Activated T-helper 2 cell treated with anti-CD3 and anti-CD28 coated beads, Interferon-gamma antibody, Interleukin-2, Interleukin-4, amounts not matched to agents 10 μg/mL and 5 μg/mL and 100 μg/mL, durations not matched to agents 14 hours and 24 hours and 36 hours (primary cell): ENCODE measurements at regions of chrX and their contacts with region 1.

Region 1: GRCh38 chrX:139559383-139560042 is 29.0 kb downstream of the F9 start:
- DNase-seq: no peak
- H3K4me3 Mint-ChIP-seq: no peak overlapping the region
- H3K27ac Mint-ChIP-seq: no peak overlapping the region
- H3K4me1 Mint-ChIP-seq: no peaks in the 10 kb centered on the region
- H3K27me3 Mint-ChIP-seq: peaks cover 3% of the 10 kb centered on the region

Region 2: DNA sequence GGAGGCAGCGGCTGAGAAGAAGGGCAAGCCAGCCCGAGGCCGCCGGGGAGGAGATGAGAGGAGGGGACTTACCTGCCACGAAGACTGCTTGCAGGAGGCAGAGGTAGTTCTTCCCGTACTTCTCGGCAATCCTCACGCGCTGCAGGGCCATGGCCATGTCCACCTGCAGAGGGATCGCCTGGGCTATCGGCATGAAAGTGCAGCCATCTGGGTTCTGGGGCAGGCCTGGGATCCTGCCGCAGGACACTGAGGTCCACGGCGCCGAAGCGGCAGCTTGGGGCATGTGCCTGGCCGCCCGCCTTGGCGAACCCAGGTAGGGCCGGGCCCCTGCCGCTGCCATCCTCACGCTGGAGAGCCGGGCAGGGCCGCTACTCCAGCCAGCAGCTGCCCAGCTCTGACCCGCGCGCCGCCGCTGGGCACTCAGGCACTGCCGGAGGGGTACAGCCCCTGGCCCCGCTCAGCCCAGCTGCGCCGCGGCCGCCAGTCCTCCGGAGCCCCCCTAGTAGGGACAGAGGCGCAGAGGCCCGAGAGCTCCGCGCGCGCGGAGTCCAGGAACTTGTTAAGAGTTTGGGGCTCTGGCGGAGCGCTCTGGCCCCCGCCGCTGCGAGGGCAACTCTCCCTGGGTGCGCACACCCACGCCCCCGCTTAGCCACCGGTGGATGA is 132.5 kb after region 1 on chrX:
- intact Hi-C with region 1: no loop called
- DNase-seq: no peak
- H3K4me3 Mint-ChIP-seq: peak overlapping the region; percentile 39
- H3K27ac Mint-ChIP-seq: no peak overlapping the region
- H3K4me1 Mint-ChIP-seq: peaks cover 2% of the 10 kb centered on the region
- H3K27me3 Mint-ChIP-seq: peaks cover 24% of the 10 kb centered on the region

Region 3: GRCh38 chrX:139759637-139760036 is 200.1 kb after region 1 on chrX:
- intact Hi-C with region 1: loop called (anchors 10 kb)
- DNase-seq: no peak
- H3K4me3 Mint-ChIP-seq: no peak overlapping the region
- H3K27ac Mint-ChIP-seq: no peak overlapping the region
- H3K4me1 Mint-ChIP-seq: peaks cover 17% of the 10 kb centered on the region
- H3K27me3 Mint-ChIP-seq: no peaks in the 10 kb centered on the region